Mammary epithelial cell (primary cell): ENCODE measurements at regions of chr11 and their contacts with region 1.

Region 1: DNA sequence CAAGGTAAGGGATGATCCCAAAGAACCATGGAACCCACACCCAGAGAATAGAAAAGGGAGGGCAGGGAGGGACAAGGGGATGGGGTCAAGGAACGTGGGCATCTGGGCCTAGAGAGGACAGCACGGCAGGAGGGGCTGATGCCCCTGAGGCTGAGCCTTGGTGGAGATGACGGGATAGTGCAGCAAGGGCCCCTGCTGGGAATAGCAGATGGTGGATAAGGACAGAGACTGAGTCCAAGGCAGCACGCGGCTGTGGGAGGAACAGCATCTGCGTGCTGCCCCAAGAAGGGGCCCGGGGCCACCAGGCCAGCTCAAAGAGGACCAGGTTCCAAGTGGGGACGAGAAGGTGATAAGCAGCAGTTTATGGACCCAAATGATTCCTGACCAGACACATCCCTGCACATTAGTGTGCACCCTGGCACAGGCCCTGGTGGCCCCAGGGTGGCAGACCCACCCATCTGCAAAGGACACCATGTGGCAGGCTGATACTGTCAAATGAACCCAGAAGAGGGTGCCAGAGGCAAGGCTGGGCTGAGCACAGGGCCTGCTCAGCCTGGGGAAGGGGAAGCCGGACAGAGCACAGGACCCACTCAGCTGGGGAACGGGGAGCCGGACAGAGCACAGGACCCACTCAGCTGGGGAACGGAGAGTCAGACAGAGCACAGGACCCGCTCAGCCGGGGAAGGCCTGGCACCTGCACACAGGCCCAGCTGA is 12.8 kb upstream of the TESMIN start:
- DNase-seq: no peak
- H3K4me3 ChIP-seq: no peak overlapping the region
- H3K27ac ChIP-seq: no peak overlapping the region
- H3K4me1 ChIP-seq: no peaks in the 10 kb centered on the region
- H3K27me3 ChIP-seq: no peaks in the 10 kb centered on the region
- CTCF ChIP-seq: peak in 1 of 2 donors; percentile 26

Region 2: DNA sequence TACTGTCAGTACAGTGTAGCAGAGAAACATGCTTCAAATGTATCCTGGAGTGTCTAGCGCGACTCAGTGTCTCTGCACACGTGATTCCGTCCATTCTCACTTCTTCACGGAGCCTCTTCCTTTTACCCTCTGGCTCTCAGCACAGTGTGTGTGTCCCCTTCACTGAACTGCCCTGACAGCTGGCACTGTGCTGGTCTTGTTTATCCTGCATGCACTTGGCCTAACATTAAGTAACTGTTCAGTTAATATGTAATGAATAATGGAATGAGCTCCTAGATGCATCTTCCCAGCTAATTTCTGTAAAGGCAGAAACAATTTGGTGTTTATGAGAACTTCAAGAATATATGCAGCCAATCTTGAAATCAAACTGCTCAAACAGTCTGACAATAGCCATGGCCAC is 595.4 kb before region 1 on chr11:
- CTCF ChIA-PET with region 1: no interaction called
- dilution Hi-C with region 1: no loop called
- in situ Hi-C with region 1: no loop called
- intact Hi-C with region 1: no loop called
- DNase-seq: no peak
- H3K4me3 ChIP-seq: no peak overlapping the region
- H3K27ac ChIP-seq: no peak overlapping the region
- H3K4me1 ChIP-seq: no peaks in the 10 kb centered on the region
- H3K27me3 ChIP-seq: no peaks in the 10 kb centered on the region
- CTCF ChIP-seq: no peak

Region 3: GRCh38 chr11:68862421-68862820 is 98.3 kb after region 1 on chr11:
- CTCF ChIA-PET with region 1: no interaction called
- dilution Hi-C with region 1: loop called (anchors 5 kb)
- in situ Hi-C with region 1: no loop called
- intact Hi-C with region 1: no loop called
- DNase-seq: no peak
- H3K4me3 ChIP-seq: no peak overlapping the region
- H3K27ac ChIP-seq: no peak overlapping the region
- H3K4me1 ChIP-seq: no peaks in the 10 kb centered on the region
- H3K27me3 ChIP-seq: no peaks in the 10 kb centered on the region
- CTCF ChIP-seq: no peak